PC-3 (cell line): ENCODE measurements at regions of chr18 and their contacts with region 1.

Region 1: GRCh38 chr18:63683152-63683551 is 19.6 kb upstream of the SERPINB11 start:
- DNase-seq: peak; percentile 97
- ATAC-seq: peak; percentile 87
- H3K4me3 ChIP-seq: peak overlapping the region; percentile 36; the same call in 1 of the 2 replicates
- H3K27ac ChIP-seq: peak overlapping the region; percentile 100
- H3K4me1 ChIP-seq: peaks cover 48% of the 10 kb centered on the region
- H3K27me3 ChIP-seq: no peaks in the 10 kb centered on the region
- CTCF ChIP-seq: no peak

Region 2: DNA sequence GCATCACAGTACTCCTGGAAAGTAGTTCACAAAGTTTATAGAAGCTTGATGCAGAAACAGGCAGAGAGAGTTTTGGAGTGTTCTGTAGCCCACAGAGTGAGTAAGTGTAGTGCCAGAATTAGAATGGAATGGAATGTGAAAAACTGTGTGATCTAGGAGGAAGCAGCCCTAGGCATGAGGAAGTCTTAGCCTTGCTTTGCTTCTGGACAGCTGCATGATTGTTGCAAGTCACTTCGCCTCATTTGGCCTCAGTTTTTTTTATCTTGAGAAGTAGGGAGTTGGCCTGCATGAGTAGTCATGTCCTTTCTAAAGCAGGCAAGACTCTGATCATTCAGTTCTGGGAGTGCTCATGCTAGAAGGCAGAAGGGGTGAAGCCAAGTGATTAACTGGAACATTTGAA is 130.0 kb before region 1 on chr18:
- CTCF ChIA-PET with region 1: no interaction called
- POLR2A ChIA-PET with region 1: no interaction called
- intact Hi-C with region 1: no loop called
- DNase-seq: peak; percentile 41
- ATAC-seq: peak; percentile 56
- H3K4me3 ChIP-seq: no peak overlapping the region
- H3K27ac ChIP-seq: no peak overlapping the region
- H3K4me1 ChIP-seq: peaks cover 12% of the 10 kb centered on the region; the same call in 1 of the 2 replicates
- H3K27me3 ChIP-seq: no peaks in the 10 kb centered on the region
- CTCF ChIP-seq: no peak

Region 3: GRCh38 chr18:63578357-63578958 is 104.7 kb before region 1 on chr18:
- CTCF ChIA-PET with region 1: no interaction called
- POLR2A ChIA-PET with region 1: no interaction called
- intact Hi-C with region 1: loop called (anchors 5 kb)
- DNase-seq: peak; percentile 69
- ATAC-seq: peak; percentile 48; the same call in 1 of the 2 replicates
- H3K4me3 ChIP-seq: no peak overlapping the region
- H3K27ac ChIP-seq: no peak overlapping the region
- H3K4me1 ChIP-seq: no peaks in the 10 kb centered on the region
- H3K27me3 ChIP-seq: no peaks in the 10 kb centered on the region
- CTCF ChIP-seq: peak; percentile 90

Region 4: DNA sequence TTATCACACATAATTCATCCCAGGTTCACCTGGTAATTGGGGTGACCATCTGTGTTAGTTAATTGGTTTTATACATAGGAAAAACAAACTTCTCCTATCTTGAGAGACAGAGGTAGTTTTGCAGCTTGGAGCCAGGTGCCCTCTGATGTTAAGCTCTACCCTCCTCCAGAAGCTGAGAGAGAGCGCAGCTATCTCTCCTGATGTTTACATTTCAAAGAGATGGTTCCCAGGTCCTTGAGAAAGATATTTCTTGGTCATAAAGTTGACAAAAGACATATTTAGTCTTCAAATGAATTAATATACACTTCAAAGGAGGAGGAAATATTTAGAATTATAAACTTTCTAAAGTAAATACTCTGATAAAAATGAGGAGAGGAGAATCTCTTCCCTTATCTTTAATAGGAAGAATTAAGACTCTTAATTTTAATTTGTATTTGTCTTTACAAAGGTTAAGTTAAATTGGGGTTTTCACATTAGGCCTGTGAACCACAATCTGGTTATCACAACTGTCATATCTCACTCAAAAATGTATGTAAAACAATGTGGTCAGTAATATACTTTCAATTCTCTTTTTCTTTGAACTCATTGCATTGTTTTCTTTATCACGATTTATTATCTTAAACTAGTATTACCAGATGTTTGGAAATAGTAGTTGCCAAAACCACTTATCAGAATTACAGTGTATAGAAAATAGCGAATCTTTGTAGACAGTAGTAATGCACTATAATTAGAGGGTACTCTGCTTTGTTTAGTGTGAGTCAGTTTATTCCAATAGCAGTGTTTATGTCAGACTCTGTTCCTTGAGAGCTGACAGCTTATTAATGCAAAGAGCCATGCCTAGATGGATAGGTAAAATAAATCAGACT is 65.9 kb before region 1 on chr18:
- CTCF ChIA-PET with region 1: no interaction called
- POLR2A ChIA-PET with region 1: interaction called, 14 read pairs
- intact Hi-C with region 1: no loop called
- DNase-seq: no peak
- ATAC-seq: no peak
- H3K4me3 ChIP-seq: no peak overlapping the region
- H3K27ac ChIP-seq: no peak overlapping the region
- H3K4me1 ChIP-seq: no peaks in the 10 kb centered on the region
- H3K27me3 ChIP-seq: no peaks in the 10 kb centered on the region
- CTCF ChIP-seq: no peak

Region 5: DNA sequence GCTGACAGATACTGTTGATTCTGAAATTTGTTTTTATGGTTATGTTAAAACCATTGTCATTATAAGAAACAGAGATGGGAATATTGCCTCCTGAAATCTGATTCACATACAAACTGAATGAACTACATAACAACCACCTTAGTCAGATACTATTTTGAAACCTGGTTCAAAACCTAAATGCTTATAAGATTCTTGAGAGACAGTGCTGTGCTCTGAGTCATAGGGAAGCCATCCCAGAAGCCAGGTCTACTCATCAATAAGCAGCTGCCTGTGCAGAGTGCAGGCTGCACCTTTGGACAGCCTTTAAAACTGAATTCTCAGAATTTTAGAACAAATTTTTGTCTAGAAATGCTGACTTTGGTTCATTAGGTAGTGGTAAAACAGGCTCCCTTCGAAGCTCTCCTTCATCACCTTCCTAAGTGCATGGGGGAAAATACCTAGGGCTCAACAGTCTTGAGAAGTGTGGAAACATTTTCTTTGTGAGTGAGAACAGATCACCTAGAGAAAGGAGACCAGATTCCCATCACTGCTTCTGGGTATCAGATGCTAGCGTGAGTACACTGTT is 92.1 kb after region 1 on chr18 and contains the start of gene SERPINB7:
- CTCF ChIA-PET with region 1: no interaction called
- POLR2A ChIA-PET with region 1: no interaction called
- intact Hi-C with region 1: loop called (anchors 5 kb)
- DNase-seq: peak; percentile 96
- ATAC-seq: peak; percentile 92
- H3K4me3 ChIP-seq: peak within 1 kb of the TSS; percentile 51
- H3K27ac ChIP-seq: peak within 1 kb of the TSS; percentile 97
- H3K4me1 ChIP-seq: peaks cover 74% of the 10 kb centered on the region
- H3K27me3 ChIP-seq: no peaks in the 10 kb centered on the region
- CTCF ChIP-seq: no peak
- total RNA-seq, gene SERPINB7: 71.9 and 74.5 TPM in 2 replicates